PC-9 (cell line): ENCODE measurements at regions of chr7 and their contacts with region 1.

Region 1: GRCh38 chr7:78020136-78020873 is 221.7 kb downstream of the PHTF2 start:
- DNase-seq: peak; percentile 52 to 61
- H3K4me3 ChIP-seq: peak overlapping the region; percentile 80; the same call in 1 of the 2 replicates
- H3K27ac ChIP-seq: no peak overlapping the region
- H3K4me1 ChIP-seq: no peaks in the 10 kb centered on the region
- H3K27me3 ChIP-seq: peaks cover 21% of the 10 kb centered on the region; the same call in 1 of the 2 replicates
- CTCF ChIP-seq: peak; percentile 77

Region 2: GRCh38 chr7:77657427-77658224 is 362.7 kb before region 1 on chr7:
- CTCF ChIA-PET with region 1: no interaction called
- POLR2A ChIA-PET with region 1: no interaction called
- intact Hi-C with region 1: loop called (anchors 1 kb)
- DNase-seq: peak in 1 of 2 experiments; percentile 50
- H3K4me3 ChIP-seq: no peak overlapping the region
- H3K27ac ChIP-seq: no peak overlapping the region
- H3K4me1 ChIP-seq: no peaks in the 10 kb centered on the region
- H3K27me3 ChIP-seq: no peaks in the 10 kb centered on the region
- CTCF ChIP-seq: peak; percentile 73

Region 3: GRCh38 chr7:77989981-77990566 is 30.2 kb before region 1 on chr7:
- CTCF ChIA-PET with region 1: no interaction called
- POLR2A ChIA-PET with region 1: interaction called, 5 read pairs
- intact Hi-C with region 1: loop called (anchors 2 kb)
- DNase-seq: peak; percentile 72 to 81
- H3K4me3 ChIP-seq: no peak overlapping the region
- H3K27ac ChIP-seq: 0 out of 2 replicates have a peak overlapping the region, but pooled peaks have one; percentile 32
- H3K4me1 ChIP-seq: peaks cover 11% of the 10 kb centered on the region; the same call in 1 of the 2 replicates
- H3K27me3 ChIP-seq: no peaks in the 10 kb centered on the region
- CTCF ChIP-seq: no peak

Region 4: GRCh38 chr7:78326876-78327275 is 306.6 kb after region 1 on chr7:
- CTCF ChIA-PET with region 1: no interaction called
- POLR2A ChIA-PET with region 1: no interaction called
- intact Hi-C with region 1: loop called (anchors 2 kb)
- DNase-seq: peak in 1 of 2 experiments; percentile 70
- H3K4me3 ChIP-seq: no peak overlapping the region
- H3K27ac ChIP-seq: no peak overlapping the region
- H3K4me1 ChIP-seq: no peaks in the 10 kb centered on the region
- H3K27me3 ChIP-seq: no peaks in the 10 kb centered on the region
- CTCF ChIP-seq: no peak

Region 5: GRCh38 chr7:78587443-78588044 is 567.2 kb after region 1 on chr7:
- CTCF ChIA-PET with region 1: no interaction called
- POLR2A ChIA-PET with region 1: no interaction called
- intact Hi-C with region 1: loop called (anchors 10 kb)
- DNase-seq: peak in 1 of 2 experiments; percentile 18
- H3K4me3 ChIP-seq: no peak overlapping the region
- H3K27ac ChIP-seq: no peak overlapping the region
- H3K4me1 ChIP-seq: no peaks in the 10 kb centered on the region
- H3K27me3 ChIP-seq: no peaks in the 10 kb centered on the region
- CTCF ChIP-seq: peak; percentile 53

Region 6: GRCh38 chr7:79137942-79138341 is 1117.6 kb after region 1 on chr7:
- CTCF ChIA-PET with region 1: no interaction called
- POLR2A ChIA-PET with region 1: no interaction called
- intact Hi-C with region 1: no loop called
- DNase-seq: no peak
- H3K4me3 ChIP-seq: no peak overlapping the region
- H3K27ac ChIP-seq: no peak overlapping the region
- H3K4me1 ChIP-seq: no peaks in the 10 kb centered on the region
- H3K27me3 ChIP-seq: no peaks in the 10 kb centered on the region
- CTCF ChIP-seq: no peak